ENCODE measurements at regions of chr1 and their contacts with region 1.

Region 1: DNA sequence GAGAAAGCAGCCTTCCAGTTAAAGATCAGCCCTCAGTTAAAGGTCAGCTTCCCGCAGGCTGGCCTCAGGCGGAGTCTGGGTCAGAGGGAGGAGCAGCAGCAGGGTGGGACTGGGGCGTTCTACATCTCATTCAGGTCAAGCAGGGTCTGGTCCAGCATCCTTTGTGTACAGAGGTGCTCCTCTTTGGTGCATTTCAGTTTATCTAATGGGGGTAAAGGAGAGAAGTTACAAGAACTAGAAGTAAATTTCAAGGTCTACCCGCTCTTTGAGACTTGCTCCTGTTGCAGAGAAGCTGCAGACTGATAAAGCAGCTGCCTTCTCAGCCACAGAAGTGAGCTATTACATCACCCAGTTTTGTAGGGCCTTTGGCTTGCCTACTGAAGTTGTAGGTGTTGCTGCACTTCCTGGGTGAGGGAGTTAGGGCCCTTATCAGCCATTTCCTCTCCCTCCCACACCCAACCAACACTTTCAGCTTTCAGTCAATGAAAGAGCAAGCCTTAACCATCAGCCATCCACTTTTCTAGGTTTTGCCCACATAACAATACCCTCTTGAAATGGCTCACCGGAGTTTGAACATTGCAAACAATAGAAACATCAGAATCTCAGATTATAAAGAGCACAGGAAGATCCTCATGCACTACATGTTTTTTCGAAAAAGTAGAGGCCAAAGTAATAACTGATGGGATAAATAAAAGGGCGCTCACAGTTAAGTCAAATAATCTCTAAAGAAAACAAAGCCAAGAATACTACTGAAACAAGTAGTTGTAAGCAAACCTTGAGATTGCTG is 2.8 kb upstream of the NUP210L start:
- DNase-seq: peak; percentile 38 to 89 (median 73)
- ATAC-seq: peak; percentile 99
- H3K4me3 ChIP-seq: no peak overlapping the region
- H3K4me3 Mint-ChIP-seq: peak overlapping the region; percentile 57 to 72 (median 67)
- H3K27ac ChIP-seq: peak overlapping the region; percentile 77
- H3K27ac Mint-ChIP-seq: peak overlapping the region; percentile 97 to 98
- H3K4me1 ChIP-seq: peaks cover 53 to 60% of the 10 kb centered on the region in 2 experiments
- H3K4me1 Mint-ChIP-seq: peaks cover 64 to 71% (median 70%) of the 10 kb centered on the region in 3 donors
- H3K27me3 ChIP-seq: no peaks in the 10 kb centered on the region
- H3K27me3 Mint-ChIP-seq: no peaks in the 10 kb centered on the region

Region 2: DNA sequence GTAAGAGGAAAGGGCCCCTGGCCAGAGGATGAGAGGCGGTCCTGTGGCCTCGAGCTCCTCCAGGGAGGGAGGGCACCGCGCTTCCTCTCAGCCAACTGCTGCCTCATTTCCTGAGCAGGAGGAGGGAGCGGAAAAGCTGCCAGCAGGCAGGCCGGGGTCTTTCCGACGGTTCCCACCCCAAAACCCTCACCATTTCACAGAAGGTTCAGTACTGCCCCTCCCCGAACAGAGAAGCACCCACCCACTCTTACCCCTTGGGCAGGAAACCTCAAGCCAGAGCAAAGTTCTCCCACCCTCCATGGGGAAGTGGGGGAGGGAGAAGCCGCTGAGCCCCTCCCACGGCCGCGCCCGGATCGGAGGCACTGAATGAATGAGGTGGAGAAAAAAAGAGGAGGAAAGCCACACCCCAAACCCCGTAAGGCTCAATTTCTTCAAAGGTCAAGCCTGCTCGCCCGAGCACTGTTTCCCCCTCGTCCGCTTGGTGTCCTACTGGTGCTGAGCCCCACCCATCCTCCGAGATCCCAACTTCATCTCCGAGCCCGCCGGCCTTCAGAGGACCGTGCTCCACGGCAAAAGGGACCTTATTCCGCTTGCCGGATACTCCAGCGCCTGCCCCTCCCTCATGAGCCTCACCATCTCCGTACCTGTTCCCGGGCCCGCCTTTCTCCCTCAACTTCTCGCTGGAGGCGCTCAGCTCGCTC is 24.8 kb after region 1 on chr1:
- CTCF ChIA-PET with region 1: interaction called, 3 to 10 read pairs
- POLR2A ChIA-PET with region 1: interaction called in 1 of 2 experiments, 8 read pairs
- DNase-seq: peak in 32 of 35 experiments; percentile 21 to 76 (median 52)
- ATAC-seq: peak; percentile 43 to 59 (median 54)
- H3K4me3 ChIP-seq: peak overlapping the region; percentile 94 to 96
- H3K4me3 Mint-ChIP-seq: peak overlapping the region; percentile 95 to 100 (median 100)
- H3K27ac ChIP-seq: peak overlapping the region; percentile 86
- H3K27ac Mint-ChIP-seq: peak overlapping the region; percentile 100
- H3K4me1 ChIP-seq: peaks cover 39 to 53% of the 10 kb centered on the region in 2 experiments
- H3K4me1 Mint-ChIP-seq: peaks cover 56 to 60% (median 58%) of the 10 kb centered on the region in 3 donors
- H3K27me3 ChIP-seq: no peaks in the 10 kb centered on the region
- H3K27me3 Mint-ChIP-seq: no peaks in the 10 kb centered on the region